ENCODE measurements at regions of chr12 and their contacts with region 1.

Region 1: DNA sequence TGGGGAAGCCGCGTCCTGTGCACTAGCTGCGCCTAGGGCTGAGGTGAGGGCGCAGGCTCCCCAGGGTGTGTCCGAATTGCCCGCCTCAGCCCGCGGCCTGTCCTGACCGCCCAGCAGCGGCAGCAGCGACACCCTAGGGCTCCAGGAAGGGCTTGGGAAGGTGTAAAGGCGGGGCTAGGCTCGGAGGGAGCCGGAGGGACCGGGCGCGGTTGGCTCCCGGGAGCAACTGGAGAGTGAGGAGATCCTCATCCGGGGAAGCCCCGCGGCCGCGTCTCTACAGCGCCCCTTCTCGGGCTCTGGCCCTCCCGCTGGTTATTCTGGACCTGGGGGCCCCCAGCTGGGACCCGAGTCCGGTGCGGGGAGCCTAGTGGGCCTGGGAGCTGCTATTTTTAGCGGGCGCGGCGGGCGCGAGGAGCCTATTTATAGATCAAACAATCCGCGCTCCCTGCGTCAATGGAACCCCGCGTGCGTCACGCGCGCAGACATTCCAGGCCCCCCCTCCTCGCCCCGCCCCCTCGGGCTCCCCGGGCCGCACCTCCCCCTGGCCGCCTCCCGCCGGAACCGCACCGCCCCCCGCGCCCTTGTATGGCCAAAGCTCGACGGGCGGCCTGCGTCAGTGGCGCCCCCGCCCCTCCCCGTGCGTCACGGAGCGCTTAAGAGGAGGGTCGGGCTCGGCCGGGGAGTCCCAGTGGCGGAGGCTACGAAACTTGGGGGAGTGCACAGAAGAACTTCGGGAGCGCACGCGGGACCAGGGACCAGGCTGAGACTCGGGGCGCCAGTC is at the start of gene NR4A1:
- DNase-seq: peak; percentile 99 to 100 (median 99)
- ATAC-seq: peak; percentile 82 to 89 (median 84)
- H3K4me3 ChIP-seq: peak within 1 kb of the TSS; percentile 48 to 83 (median 74)
- H3K27ac ChIP-seq: peak within 1 kb of the TSS; percentile 89 to 99 (median 97)
- H3K4me1 ChIP-seq: peaks cover 5 to 92% (median 44%) of the 10 kb centered on the region in 12 donors
- H3K27me3 ChIP-seq: no peaks in the 10 kb centered on the region
- CTCF ChIP-seq: peak in 9 of 12 donors; percentile 11 to 64 (median 35)
- POLR2A ChIP-seq: peak; percentile 97
- total RNA-seq, gene NR4A1: 22.0 to 140 (median 42.0) TPM

Region 2: GRCh38 chr12:51471111-51471864 is 579.7 kb before region 1 on chr12:
- intact Hi-C with region 1: no loop called
- DNase-seq: no peak
- ATAC-seq: no peak
- H3K4me3 ChIP-seq: no peak overlapping the region
- H3K27ac ChIP-seq: no peak overlapping the region
- H3K4me1 ChIP-seq: no peaks in the 10 kb centered on the region
- H3K27me3 ChIP-seq: peaks cover 0 to 4% (median 0%) of the 10 kb centered on the region in 9 donors
- CTCF ChIP-seq: no peak
- POLR2A ChIP-seq: no peak

Region 3: DNA sequence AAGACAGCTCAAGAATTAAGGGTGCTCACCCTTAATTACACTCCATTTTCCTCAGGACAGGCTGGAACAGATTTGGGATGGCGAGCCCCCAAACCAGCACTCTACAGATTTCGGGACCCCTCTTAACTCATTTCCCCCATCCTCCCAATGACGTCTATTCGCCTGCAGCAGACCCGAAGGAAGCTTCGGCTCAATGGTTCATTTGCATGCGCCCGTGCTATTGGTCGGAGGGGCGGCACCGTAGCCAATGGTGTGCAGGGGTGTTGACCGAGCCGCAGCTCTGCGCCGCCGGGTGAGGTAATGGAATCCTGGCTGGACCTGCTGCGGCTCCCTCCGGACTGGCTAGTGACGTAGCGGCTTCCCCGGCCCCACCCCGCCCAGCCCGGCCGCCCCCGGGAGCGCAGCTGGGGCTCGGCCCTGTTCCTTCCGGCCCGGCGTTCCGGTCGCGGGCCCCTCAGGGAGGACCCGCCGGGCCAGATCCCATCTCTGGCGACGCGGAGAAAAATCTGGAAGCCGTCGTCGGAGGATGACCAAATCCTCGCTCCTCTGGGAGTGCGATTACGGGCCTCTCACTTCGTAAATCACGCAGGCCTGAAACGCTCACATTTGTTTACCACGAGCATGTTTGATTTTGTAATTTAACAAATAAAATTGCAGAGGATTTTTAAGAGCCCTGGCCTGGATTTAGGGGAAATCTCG is 18.0 kb before region 1 on chr12:
- intact Hi-C with region 1: loop called in 4 of 10 experiments (anchors 2 kb)
- DNase-seq: peak; percentile 98 to 100 (median 99)
- ATAC-seq: peak; percentile 92 to 95 (median 94)
- H3K4me3 ChIP-seq: peak overlapping the region in 10 of 12 donors; percentile 20 to 52 (median 43)
- H3K27ac ChIP-seq: peak overlapping the region; percentile 83 to 98 (median 96)
- H3K4me1 ChIP-seq: peaks cover 14 to 63% (median 38%) of the 10 kb centered on the region in 12 donors
- H3K27me3 ChIP-seq: no peaks in the 10 kb centered on the region
- CTCF ChIP-seq: no peak
- POLR2A ChIP-seq: peak; percentile 85 to 91

Region 4: DNA sequence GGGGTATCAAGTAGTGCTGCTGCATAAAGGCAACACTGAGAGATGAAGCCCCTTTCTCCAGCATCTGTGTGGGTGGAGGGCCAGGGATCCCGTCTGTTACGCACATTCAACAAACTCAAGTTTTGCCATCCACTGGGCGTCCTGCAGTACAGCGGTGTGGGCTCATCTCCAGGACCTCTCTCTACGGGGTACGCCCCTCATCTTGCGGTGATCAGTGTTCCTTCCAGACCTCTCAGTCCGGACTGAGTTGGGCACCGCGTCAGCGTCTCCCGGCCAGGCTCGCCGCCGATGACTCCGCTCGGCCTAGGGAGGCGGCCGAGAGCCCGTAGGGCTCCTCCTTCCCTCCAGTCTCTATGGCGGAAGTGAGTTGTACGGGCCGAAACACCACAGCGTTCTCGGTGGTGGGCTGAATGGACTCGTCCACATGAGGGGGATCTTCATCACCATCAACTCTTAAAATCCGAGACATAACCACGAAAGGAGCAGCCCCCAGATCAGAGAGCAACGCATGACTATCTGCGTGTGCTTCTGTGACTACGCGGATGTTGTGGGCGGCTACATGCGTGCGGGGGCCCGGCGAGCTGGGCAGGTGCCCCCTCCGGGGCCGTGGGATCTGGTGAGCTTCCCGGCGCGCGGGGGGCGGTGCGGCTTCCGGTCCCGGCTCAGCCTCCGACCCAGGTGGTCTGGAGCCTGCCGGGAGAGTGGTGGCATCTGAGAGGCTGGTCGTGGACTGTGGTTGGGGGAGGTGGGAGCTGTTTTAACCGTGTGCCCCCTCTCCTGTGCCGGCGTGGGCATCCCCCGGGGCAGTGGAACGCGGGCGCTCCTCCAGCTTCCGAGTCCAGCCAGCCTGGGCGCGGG is 18.6 kb after region 1 on chr12 and contains the start of gene ATG101:
- intact Hi-C with region 1: loop called in 3 of 10 experiments (anchors 1 to 2 kb)
- DNase-seq: peak; percentile 91 to 94 (median 93)
- ATAC-seq: peak; percentile 97 to 99 (median 98)
- H3K4me3 ChIP-seq: peak within 1 kb of the TSS; percentile 74 to 97 (median 86)
- H3K27ac ChIP-seq: peak within 1 kb of the TSS; percentile 82 to 97 (median 93)
- H3K4me1 ChIP-seq: peaks cover 9 to 44% (median 29%) of the 10 kb centered on the region in 12 donors
- H3K27me3 ChIP-seq: no peaks in the 10 kb centered on the region
- CTCF ChIP-seq: peak; percentile 51 to 91 (median 74)
- POLR2A ChIP-seq: peak in 1 of 2 donors; percentile 65
- total RNA-seq, gene ATG101: 18.9 to 46.7 (median 24.1) TPM